ENCODE measurements at regions of chr1 and their contacts with region 1.

Region 1: DNA sequence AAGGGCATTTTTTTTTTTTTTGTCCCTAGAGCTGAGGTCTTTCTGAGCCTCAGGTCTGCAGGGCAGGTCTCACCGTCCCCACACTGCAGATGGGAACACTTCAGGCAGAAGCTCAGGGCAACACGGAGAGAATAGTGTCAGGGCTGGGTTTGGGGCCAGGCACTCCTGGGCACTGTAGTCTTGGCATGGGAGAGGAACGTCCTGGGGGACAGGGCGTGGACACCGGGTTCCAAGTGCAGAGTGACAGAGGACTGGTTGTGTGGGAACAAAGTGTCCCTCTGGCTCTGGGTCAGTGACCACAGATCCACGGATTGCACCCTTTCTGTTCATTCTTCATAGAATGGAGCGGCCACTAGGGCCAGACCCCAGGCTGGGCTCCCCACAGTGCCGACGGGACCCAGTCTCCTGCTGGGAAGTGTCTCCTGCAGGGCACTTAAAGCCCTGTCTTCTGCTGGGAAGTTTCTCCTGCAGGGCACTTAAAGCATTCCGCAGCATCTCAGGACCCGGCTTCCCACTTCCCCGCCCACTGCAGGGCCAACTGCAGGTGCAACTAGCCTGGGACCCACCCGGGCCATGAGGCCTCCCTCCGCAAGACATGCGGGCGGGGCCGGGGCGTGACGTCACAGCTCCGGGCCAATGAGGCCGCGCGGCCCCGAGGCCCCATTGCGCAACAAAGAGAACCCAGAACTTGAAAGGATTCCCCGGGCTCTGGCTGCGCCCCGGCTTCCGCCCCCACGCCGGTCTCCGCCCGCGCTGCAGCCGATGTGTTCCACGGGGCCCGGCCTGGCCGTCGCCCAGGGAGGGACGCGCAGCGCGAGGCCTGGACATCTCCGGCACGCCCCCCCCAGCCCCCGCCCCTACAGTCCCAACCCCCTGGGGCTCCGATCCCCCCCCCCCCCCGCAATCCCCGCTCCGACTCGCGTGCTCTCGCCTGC is 1.1 kb downstream of the GPR153 start:
- DNase-seq: peak in 1 of 2 experiments; percentile 91
- H3K4me3 ChIP-seq: peak overlapping the region; percentile 45 to 86 (median 50)
- H3K27ac ChIP-seq: no peak overlapping the region
- H3K4me1 ChIP-seq: peaks cover 0 to 13% (median 3%) of the 10 kb centered on the region in 4 experiments; a peak in 6 of 7 replicates
- H3K27me3 ChIP-seq: peaks cover 0 to 20% (median 13%) of the 10 kb centered on the region in 4 experiments; a peak in 3 of 7 replicates
- CTCF ChIP-seq: no peak
- EP300 ChIP-seq: no peak
- POLR2A ChIP-seq: no peak
- RAD21 ChIP-seq: no peak

Region 2: GRCh38 chr1:6275826-6276782 is 16.3 kb after region 1 on chr1:
- CTCF ChIA-PET with region 1: interaction called, 16 read pairs
- POLR2A ChIA-PET with region 1: no interaction called
- DNase-seq: no peak
- H3K4me3 ChIP-seq: no peak overlapping the region
- H3K27ac ChIP-seq: no peak overlapping the region
- H3K4me1 ChIP-seq: peaks cover 0 to 25% (median 13%) of the 10 kb centered on the region in 4 experiments; a peak in 6 of 7 replicates
- H3K27me3 ChIP-seq: no peaks in the 10 kb centered on the region
- CTCF ChIP-seq: no peak
- EP300 ChIP-seq: no peak
- POLR2A ChIP-seq: no peak
- RAD21 ChIP-seq: no peak

Region 3: GRCh38 chr1:6294615-6295556 is 35.1 kb after region 1 on chr1:
- CTCF ChIA-PET with region 1: no interaction called
- POLR2A ChIA-PET with region 1: no interaction called
- DNase-seq: no peak
- H3K4me3 ChIP-seq: no peak overlapping the region
- H3K27ac ChIP-seq: no peak overlapping the region
- H3K4me1 ChIP-seq: no peaks in the 10 kb centered on the region
- H3K27me3 ChIP-seq: no peaks in the 10 kb centered on the region
- CTCF ChIP-seq: no peak
- EP300 ChIP-seq: no peak
- POLR2A ChIP-seq: no peak
- RAD21 ChIP-seq: no peak